CD4-positive, alpha-beta T cell (primary cell): ENCODE measurements at regions of chr17 and their contacts with region 1.

Region 1: GRCh38 chr17:76506408-76507349 is 5.5 kb upstream of the RHBDF2 start:
- DNase-seq: peak; percentile 74 to 94 (median 88)
- ATAC-seq: peak; percentile 85
- H3K4me3 ChIP-seq: no peak overlapping the region
- H3K4me3 Mint-ChIP-seq: no peak overlapping the region
- H3K27ac ChIP-seq: no peak overlapping the region
- H3K27ac Mint-ChIP-seq: no peak overlapping the region
- H3K4me1 ChIP-seq: peaks cover 32% of the 10 kb centered on the region
- H3K4me1 Mint-ChIP-seq: peaks cover 16% of the 10 kb centered on the region
- H3K27me3 ChIP-seq: no peaks in the 10 kb centered on the region
- H3K27me3 Mint-ChIP-seq: no peaks in the 10 kb centered on the region
- CTCF ChIP-seq: peak; percentile 89

Region 2: GRCh38 chr17:76307299-76307965 is 199.2 kb before region 1 on chr17:
- CTCF ChIA-PET with region 1: no interaction called
- POLR2A ChIA-PET with region 1: no interaction called
- intact Hi-C with region 1: loop called (anchors 2 to 10 kb)
- DNase-seq: no peak
- ATAC-seq: no peak
- H3K4me3 ChIP-seq: no peak overlapping the region
- H3K4me3 Mint-ChIP-seq: no peak overlapping the region
- H3K27ac ChIP-seq: no peak overlapping the region
- H3K27ac Mint-ChIP-seq: no peak overlapping the region
- H3K4me1 ChIP-seq: no peaks in the 10 kb centered on the region
- H3K4me1 Mint-ChIP-seq: no peaks in the 10 kb centered on the region
- H3K27me3 ChIP-seq: no peaks in the 10 kb centered on the region
- H3K27me3 Mint-ChIP-seq: no peaks in the 10 kb centered on the region
- CTCF ChIP-seq: no peak

Region 3: GRCh38 chr17:76408052-76408849 is 98.4 kb before region 1 on chr17:
- CTCF ChIA-PET with region 1: interaction called, 3 read pairs
- POLR2A ChIA-PET with region 1: interaction called, 6 read pairs
- intact Hi-C with region 1: loop called (anchors 1 kb)
- DNase-seq: peak; percentile 54 to 85 (median 68)
- ATAC-seq: peak; percentile 95
- H3K4me3 ChIP-seq: no peak overlapping the region
- H3K4me3 Mint-ChIP-seq: no peak overlapping the region
- H3K27ac ChIP-seq: no peak overlapping the region
- H3K27ac Mint-ChIP-seq: no peak overlapping the region
- H3K4me1 ChIP-seq: peaks cover 10% of the 10 kb centered on the region
- H3K4me1 Mint-ChIP-seq: peaks cover 7% of the 10 kb centered on the region
- H3K27me3 ChIP-seq: no peaks in the 10 kb centered on the region
- H3K27me3 Mint-ChIP-seq: no peaks in the 10 kb centered on the region
- CTCF ChIP-seq: peak; percentile 94